ENCODE measurements at regions of chr17 and their contacts with region 1.

Region 1: DNA sequence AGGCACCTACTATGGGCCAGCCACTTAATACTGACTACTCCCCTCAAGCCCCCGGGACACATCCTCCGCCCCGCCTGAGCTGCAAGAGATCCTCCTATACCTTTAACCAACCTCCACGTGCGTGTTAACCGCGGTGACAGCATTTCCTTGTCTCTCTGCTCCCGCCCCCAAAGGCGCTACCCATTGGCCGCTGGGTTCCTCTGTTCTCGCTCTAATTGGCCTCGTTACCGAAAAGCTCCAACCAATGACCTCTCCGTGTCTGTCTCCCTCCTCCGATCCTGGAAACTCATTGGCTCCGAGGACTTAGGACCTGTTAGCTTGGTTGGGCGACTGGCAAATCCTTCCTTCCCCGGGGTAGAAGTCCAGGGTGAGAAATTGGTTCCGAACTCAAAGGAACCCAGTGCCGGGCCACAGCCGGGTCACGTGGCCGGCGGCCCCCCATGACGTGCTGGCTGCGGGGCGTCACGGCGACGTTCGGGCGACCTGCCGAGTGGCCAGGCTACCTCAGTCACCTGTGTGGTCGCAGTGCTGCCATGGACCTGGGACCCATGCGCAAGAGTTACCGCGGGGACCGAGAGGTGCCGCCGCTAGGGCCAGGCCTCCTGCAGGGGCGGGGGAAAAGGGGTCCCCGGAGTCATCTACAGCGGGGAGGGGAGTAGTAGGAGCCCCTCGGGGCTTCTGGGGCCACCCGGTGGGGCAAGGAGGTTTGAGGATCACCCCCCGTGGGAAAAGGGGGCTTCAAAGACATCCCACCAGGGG is at the start of gene PNPO:
- DNase-seq: peak; percentile 97
- ATAC-seq: peak; percentile 95
- H3K4me3 ChIP-seq: peak within 1 kb of the TSS; percentile 91
- H3K27ac ChIP-seq: peak within 1 kb of the TSS; percentile 86
- H3K4me1 ChIP-seq: peaks cover 48% of the 10 kb centered on the region
- H3K27me3 ChIP-seq: no peaks in the 10 kb centered on the region
- CTCF ChIP-seq: no peak
- EP300 ChIP-seq: 0 out of 4 replicates have a peak, but pooled peaks of 1 of the 2 experiments have one; percentile 12
- POLR2A ChIP-seq: peak; percentile 79
- RAD21 ChIP-seq: no peak
- polyA plus RNA-seq, gene PNPO: 13.9 to 32.3 TPM

Region 2: GRCh38 chr17:47776330-47777197 is 164.9 kb before region 1 on chr17:
- CTCF ChIA-PET with region 1: no interaction called
- POLR2A ChIA-PET with region 1: no interaction called
- RAD21 ChIA-PET with region 1: no interaction called
- SMC1A ChIA-PET with region 1: no interaction called
- in situ Hi-C with region 1: no loop called
- intact Hi-C with region 1: no loop called
- DNase-seq: no peak
- ATAC-seq: peak; percentile 93
- H3K4me3 ChIP-seq: no peak overlapping the region
- H3K27ac ChIP-seq: no peak overlapping the region
- H3K4me1 ChIP-seq: no peaks in the 10 kb centered on the region
- H3K27me3 ChIP-seq: peaks cover 0 to 4% of the 10 kb centered on the region in 2 experiments; a peak in 2 of 4 replicates
- CTCF ChIP-seq: peak; percentile 69 to 77 (median 71)
- EP300 ChIP-seq: no peak
- POLR2A ChIP-seq: no peak
- RAD21 ChIP-seq: peak; percentile 64

Region 3: DNA sequence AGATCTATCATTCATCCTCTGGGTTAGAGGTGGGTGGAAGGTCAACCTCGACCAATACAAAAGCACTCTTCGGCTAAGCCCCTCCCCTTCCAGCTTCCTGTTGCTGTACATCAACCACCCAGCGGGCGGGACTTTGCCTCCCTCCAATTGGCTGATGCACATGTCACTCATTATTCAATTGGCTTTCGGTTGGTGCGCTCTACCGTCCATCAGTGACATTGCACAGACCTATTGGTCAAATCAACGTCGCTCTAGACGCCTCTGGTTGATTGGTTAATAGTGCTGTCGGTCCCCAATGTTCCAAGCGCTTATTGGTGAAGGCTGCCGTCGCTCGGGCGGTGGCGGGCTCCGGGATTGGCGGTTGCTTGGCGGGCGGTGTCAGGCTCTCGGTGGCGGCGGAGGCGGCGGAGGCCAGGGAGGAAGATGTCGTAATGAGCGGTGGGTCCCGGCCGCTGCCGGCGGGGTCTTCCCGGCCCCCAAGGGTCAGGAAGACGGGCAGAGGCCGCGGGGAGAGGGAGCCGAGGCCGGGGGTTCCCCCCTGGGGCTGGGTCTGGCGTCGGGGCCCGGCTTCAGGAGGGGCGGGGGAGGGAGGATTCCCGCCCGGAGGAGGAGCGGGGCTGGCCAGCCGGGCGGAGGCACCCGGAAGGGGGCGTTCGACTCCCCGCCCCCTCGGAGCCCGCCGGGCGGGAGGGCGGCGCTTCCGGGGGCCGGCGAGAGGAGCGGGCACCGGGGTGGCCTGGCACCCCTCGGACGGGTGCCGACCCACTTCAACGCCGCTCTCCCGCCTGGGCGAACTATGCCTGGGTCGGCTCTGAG is 45.4 kb before region 1 on chr17 and contains the start of gene SP2:
- CTCF ChIA-PET with region 1: interaction called, 16 read pairs
- POLR2A ChIA-PET with region 1: interaction called, 18 read pairs
- RAD21 ChIA-PET with region 1: interaction called, 10 read pairs
- SMC1A ChIA-PET with region 1: interaction called, 19 read pairs
- in situ Hi-C with region 1: no loop called
- intact Hi-C with region 1: loop called (anchors 1 kb)
- DNase-seq: peak; percentile 100
- ATAC-seq: peak; percentile 94
- H3K4me3 ChIP-seq: peak within 1 kb of the TSS; percentile 95
- H3K27ac ChIP-seq: peak within 1 kb of the TSS; percentile 92
- H3K4me1 ChIP-seq: peaks cover 16% of the 10 kb centered on the region
- H3K27me3 ChIP-seq: no peaks in the 10 kb centered on the region
- CTCF ChIP-seq: no peak; a peak in 2 of 6 replicates
- EP300 ChIP-seq: no peak
- POLR2A ChIP-seq: peak; percentile 80
- RAD21 ChIP-seq: no peak
- polyA plus RNA-seq, gene SP2: 1.2 to 1.9 TPM

Region 4: DNA sequence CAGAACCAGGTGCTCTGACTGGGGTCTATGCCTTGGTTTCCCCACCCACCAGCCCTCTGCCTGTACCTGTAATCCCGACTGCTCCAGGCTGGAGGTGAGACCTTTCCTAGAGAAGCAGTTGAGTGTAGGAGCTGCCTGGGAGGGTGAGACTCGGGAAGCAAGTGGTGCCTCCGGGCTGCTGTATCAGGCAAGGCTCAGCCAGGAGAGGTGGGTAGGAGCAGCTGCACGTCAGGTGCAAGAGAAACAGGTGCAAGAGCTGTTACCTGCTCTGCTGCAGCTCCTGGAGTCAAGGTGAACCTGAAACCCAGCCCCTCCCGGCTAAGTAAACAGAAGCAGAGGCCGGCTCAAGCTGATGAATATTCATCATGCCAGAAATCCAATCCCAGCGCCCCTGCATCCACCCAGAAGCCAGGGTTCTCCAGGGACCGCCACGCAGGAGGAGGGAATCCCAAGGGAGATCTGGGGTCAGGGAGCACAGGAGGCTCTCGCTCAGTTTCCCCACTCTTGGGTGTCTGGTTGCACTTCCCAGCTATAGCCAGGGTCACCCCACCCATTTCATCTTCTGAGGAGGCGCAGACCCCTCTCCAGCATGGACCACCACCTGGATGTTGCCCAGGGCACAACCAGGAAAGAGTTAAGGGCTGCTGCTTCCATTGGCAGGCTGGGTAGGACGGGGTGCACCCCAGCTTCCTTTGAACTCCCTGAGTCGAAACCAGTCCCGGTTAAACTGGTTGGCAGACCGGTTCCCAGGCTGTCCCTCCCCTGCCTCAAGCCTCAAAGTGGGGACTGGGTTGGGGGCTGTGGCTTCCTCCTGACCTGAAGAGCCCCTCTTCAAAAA is 16.4 kb after region 1 on chr17 and contains the start of gene PRR15L:
- CTCF ChIA-PET with region 1: interaction called, 105 read pairs
- POLR2A ChIA-PET with region 1: interaction called, 7 read pairs
- RAD21 ChIA-PET with region 1: no interaction called
- SMC1A ChIA-PET with region 1: interaction called, 4 read pairs
- in situ Hi-C with region 1: no loop called
- intact Hi-C with region 1: no loop called
- DNase-seq: no peak
- ATAC-seq: no peak
- H3K4me3 ChIP-seq: no peak within 1 kb of the TSS
- H3K27ac ChIP-seq: no peak within 1 kb of the TSS
- H3K4me1 ChIP-seq: no peaks in the 10 kb centered on the region
- H3K27me3 ChIP-seq: no peaks in the 10 kb centered on the region
- CTCF ChIP-seq: no peak
- EP300 ChIP-seq: no peak
- POLR2A ChIP-seq: no peak
- RAD21 ChIP-seq: no peak
- polyA plus RNA-seq, gene PRR15L: not detected

Measured in GM12878 (cell line).